ENCODE measurements at regions of chr6 and their contacts with region 1.

Region 1: GRCh38 chr6:103183831-103184411 is 1675.8 kb downstream of the HACE1 start:
- DNase-seq: no peak
- H3K4me3 ChIP-seq: no peak overlapping the region
- H3K27ac ChIP-seq: no peak overlapping the region
- H3K4me1 ChIP-seq: no peaks in the 10 kb centered on the region
- H3K27me3 ChIP-seq: no peaks in the 10 kb centered on the region
- CTCF ChIP-seq: no peak
- EP300 ChIP-seq: no peak
- POLR2A ChIP-seq: no peak

Region 2: DNA sequence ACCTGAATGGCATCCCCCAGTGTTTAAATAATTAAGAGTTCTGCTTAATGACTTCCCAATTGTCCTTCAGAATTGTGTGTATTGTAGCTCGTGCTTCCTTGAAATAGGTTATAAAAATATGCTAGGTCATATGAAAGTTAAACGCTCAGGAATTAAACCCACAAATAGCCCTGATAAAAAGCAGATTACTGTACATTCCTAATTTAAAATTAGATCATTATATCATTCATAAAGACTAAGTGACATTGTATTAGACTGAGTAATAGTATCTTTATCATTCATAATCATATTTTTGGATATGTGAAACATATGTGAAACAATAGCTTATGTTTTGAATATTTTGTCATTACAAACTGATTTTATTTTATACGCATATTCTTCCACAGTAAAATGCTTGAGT is 30.9 kb before region 1 on chr6:
- intact Hi-C with region 1: loop called in 1 of 4 experiments (anchors 1 kb)
- DNase-seq: no peak
- H3K4me3 ChIP-seq: no peak overlapping the region
- H3K27ac ChIP-seq: no peak overlapping the region
- H3K4me1 ChIP-seq: no peaks in the 10 kb centered on the region
- H3K27me3 ChIP-seq: no peaks in the 10 kb centered on the region
- CTCF ChIP-seq: no peak
- EP300 ChIP-seq: no peak
- POLR2A ChIP-seq: no peak